A549 (cell line): ENCODE measurements at regions of chr9 and their contacts with region 1.

Region 1: GRCh38 chr9:131046581-131047202 is 37.7 kb downstream of the LAMC3 start:
- DNase-seq: peak; percentile 65 to 69
- ATAC-seq: peak; percentile 83 to 96
- H3K4me3 ChIP-seq: no peak overlapping the region
- H3K27ac ChIP-seq: no peak overlapping the region
- H3K4me1 ChIP-seq: no peaks in the 10 kb centered on the region
- CTCF ChIP-seq: peak; percentile 95
- EP300 ChIP-seq: no peak
- POLR2A ChIP-seq: no peak
- RAD21 ChIP-seq: peak; percentile 89 to 94

Region 2: GRCh38 chr9:130701056-130702022 is 345.4 kb before region 1 on chr9:
- CTCF ChIA-PET with region 1: interaction called, 21 read pairs
- POLR2A ChIA-PET with region 1: interaction called, 4 read pairs
- DNase-seq: peak; percentile 71 to 74
- ATAC-seq: peak; percentile 94 to 98
- H3K4me3 ChIP-seq: no peak overlapping the region
- H3K27ac ChIP-seq: no peak overlapping the region
- H3K4me1 ChIP-seq: no peaks in the 10 kb centered on the region
- CTCF ChIP-seq: peak; percentile 87
- EP300 ChIP-seq: no peak
- POLR2A ChIP-seq: no peak
- RAD21 ChIP-seq: peak; percentile 50 to 57; a peak in 4 of 5 replicates

Region 3: DNA sequence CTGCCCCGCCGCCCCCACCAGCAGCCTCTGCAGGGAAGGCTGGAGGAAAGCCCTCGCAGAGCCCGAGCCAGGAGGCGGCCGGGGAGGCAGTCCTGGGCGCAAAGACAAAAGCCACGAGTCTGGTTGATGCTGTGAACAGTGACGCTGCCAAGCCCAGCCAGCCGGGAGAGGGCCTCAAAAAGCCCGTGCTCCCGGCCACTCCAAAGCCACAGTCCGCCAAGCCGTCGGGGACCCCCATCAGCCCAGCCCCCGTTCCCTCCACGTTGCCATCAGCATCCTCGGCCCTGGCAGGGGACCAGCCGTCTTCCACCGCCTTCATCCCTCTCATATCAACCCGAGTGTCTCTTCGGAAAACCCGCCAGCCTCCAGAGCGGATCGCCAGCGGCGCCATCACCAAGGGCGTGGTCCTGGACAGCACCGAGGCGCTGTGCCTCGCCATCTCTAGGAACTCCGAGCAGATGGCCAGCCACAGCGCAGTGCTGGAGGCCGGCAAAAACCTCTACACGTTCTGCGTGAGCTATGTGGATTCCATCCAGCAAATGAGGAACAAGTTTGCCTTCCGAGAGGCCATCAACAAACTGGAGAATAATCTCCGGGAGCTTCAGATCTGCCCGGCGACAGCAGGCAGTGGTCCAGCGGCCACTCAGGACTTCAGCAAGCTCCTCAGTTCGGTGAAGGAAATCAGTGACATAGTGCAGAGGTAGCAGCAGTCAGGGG is 161.6 kb before region 1 on chr9:
- CTCF ChIA-PET with region 1: interaction called, 15 read pairs
- POLR2A ChIA-PET with region 1: no interaction called
- DNase-seq: no peak
- ATAC-seq: no peak
- H3K4me3 ChIP-seq: no peak overlapping the region
- H3K27ac ChIP-seq: peak overlapping the region in 1 of 2 experiments; percentile 75; a peak in 3 of 6 replicates
- H3K4me1 ChIP-seq: no peaks in the 10 kb centered on the region
- CTCF ChIP-seq: no peak
- EP300 ChIP-seq: no peak
- POLR2A ChIP-seq: no peak
- RAD21 ChIP-seq: no peak

Region 4: GRCh38 chr9:130927995-130928900 is 118.4 kb before region 1 on chr9:
- CTCF ChIA-PET with region 1: interaction called, 22 read pairs
- POLR2A ChIA-PET with region 1: no interaction called
- DNase-seq: peak; percentile 81 to 83
- ATAC-seq: peak; percentile 60 to 72
- H3K4me3 ChIP-seq: peak overlapping the region; percentile 18; the same call in 2 of the 3 replicates
- H3K27ac ChIP-seq: peak overlapping the region; percentile 82 to 93
- H3K4me1 ChIP-seq: peaks cover 38% of the 10 kb centered on the region
- CTCF ChIP-seq: no peak
- EP300 ChIP-seq: no peak
- POLR2A ChIP-seq: no peak
- RAD21 ChIP-seq: no peak

Region 5: DNA sequence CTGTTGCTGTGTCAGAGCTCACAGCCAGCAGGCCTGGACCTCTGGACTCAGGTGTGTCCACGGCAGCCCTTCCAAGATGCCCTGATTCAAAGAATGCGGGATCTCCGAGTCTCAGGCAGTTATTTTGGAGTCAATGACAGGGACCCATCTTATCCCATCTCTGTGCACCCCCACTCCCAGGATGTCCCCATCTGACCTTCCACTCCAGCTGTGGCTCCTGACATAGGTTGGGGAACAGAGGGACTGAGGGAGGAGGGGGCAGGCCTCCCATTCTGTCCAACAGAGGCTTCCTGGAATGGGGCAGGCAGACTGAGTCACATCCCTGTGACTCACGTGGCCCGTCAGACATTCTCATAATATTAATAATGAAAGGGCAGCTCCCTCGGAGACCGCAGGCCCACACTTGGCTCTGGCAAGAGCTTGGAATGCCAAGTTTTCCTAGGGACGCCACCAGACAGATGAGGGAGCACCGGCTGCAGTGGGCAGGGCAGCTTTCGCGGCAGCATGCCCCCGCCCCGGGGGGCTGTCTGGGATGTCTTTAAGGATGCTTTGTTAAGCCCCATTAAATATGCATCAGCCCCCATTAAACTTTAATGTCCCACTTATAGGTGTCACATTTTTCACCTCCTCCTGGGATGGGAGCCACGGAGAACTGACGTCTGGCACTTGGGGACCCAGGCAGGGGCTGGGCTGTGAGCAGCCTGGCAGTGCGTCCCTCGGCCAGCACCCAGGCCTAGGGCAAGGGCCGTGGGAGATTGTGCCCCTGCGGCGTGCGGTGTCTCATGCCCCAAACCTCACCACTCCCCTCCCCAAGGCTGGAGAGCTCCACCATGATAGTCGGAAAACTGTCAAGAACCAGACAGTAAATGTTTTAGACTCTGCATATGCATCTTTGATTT is 84.0 kb before region 1 on chr9:
- CTCF ChIA-PET with region 1: interaction called, 12 read pairs
- POLR2A ChIA-PET with region 1: no interaction called
- DNase-seq: peak; percentile 82 to 95
- ATAC-seq: peak; percentile 98
- H3K4me3 ChIP-seq: no peak overlapping the region
- H3K27ac ChIP-seq: peak overlapping the region; percentile 83 to 90
- H3K4me1 ChIP-seq: peaks cover 16% of the 10 kb centered on the region
- CTCF ChIP-seq: no peak
- EP300 ChIP-seq: no peak
- POLR2A ChIP-seq: no peak
- RAD21 ChIP-seq: no peak; a peak in 1 of 5 replicates

Region 6: DNA sequence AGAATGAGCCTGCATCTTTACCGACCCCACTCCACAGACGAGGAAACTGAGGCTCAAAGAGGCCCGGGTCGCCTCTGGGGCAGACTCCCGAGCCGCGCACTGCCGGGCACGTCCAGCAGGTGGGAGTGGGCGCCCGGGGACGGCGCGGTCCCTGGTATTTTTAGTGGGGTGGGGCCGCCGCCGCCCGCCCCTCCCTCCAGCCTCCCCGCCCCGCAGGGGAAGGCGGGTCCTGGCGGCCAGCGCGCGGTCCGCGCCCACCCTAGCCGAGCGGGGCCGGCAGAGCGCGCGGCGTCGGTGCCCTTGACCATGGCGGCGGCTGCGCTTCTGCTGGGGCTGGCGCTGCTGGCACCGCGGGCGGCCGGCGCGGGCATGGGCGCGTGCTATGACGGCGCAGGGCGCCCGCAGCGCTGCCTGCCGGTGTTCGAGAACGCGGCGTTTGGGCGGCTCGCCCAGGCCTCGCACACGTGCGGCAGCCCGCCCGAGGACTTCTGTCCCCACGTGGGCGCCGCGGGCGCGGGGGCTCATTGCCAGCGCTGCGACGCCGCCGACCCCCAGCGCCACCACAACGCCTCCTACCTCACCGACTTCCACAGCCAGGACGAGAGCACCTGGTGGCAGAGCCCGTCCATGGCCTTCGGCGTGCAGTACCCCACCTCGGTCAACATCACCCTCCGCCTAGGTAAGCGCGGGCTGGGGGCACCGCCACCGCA is 37.6 kb before region 1 on chr9 and contains the start of gene LAMC3:
- CTCF ChIA-PET with region 1: interaction called, 39 read pairs
- POLR2A ChIA-PET with region 1: no interaction called
- DNase-seq: peak; percentile 52 to 65
- ATAC-seq: peak; percentile 82 to 87
- H3K4me3 ChIP-seq: peak within 1 kb of the TSS; percentile 54
- H3K27ac ChIP-seq: peak within 1 kb of the TSS; percentile 56 to 82; a peak in 5 of 6 replicates
- H3K4me1 ChIP-seq: peaks cover 4% of the 10 kb centered on the region; the same call in 1 of the 3 replicates
- CTCF ChIP-seq: peak; percentile 50
- EP300 ChIP-seq: no peak
- POLR2A ChIP-seq: no peak
- RAD21 ChIP-seq: peak; percentile 44 to 69; a peak in 4 of 5 replicates
- polyA plus RNA-seq, gene LAMC3: 1.0 TPM in 2 replicates

Region 7: DNA sequence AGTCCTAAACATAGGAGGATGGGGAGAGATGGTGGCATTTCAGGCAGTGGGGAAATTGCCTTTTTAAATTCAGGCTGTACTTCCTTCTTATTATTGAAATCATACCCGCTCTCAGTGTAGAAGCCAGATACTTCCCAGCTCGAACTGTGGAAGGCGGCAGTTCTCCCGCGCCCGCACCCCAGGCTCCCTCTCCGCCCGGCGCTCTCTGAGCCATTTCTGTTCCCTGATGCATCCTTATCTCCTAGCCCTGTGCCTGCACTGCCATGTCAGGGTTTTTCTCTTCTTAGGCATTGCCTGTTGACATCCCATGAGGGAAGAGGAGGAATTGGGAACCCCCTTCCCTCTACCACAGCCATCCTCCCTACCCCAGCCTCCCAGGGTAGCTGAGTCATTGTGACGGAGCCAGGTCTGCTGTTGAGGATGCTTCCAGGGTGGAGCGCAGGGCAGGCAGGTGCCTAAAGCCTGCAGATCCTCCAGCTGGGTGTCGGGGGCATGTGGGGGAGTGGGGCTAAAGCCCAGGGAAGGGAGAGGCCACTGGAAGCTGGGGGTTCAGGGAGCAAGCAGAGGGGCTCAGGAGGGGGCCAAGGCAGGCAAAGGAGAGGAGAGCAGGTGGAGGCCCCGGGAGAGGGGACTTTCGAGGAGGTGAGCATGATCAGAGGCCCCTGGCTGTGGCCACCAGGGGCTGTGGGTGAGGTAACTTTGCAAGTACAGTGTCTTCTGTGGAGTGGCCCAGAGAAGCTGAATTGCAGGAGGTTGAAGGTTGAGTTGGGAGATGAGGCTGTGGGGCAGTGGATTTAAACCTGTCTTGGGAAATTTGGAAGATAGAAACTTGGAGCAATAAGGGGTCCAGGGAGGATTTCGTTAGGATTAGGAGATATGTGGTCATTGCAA is 21.5 kb before region 1 on chr9:
- CTCF ChIA-PET with region 1: interaction called, 33 read pairs
- POLR2A ChIA-PET with region 1: no interaction called
- DNase-seq: peak in 1 of 2 experiments; percentile 26
- ATAC-seq: peak in 1 of 2 experiments; percentile 57; a peak in 3 of 6 replicates
- H3K4me3 ChIP-seq: no peak overlapping the region
- H3K27ac ChIP-seq: peak overlapping the region; percentile 36 to 73; a peak in 4 of 6 replicates
- H3K4me1 ChIP-seq: peaks cover 11% of the 10 kb centered on the region
- CTCF ChIP-seq: no peak
- EP300 ChIP-seq: no peak
- POLR2A ChIP-seq: no peak
- RAD21 ChIP-seq: no peak

Region 8: DNA sequence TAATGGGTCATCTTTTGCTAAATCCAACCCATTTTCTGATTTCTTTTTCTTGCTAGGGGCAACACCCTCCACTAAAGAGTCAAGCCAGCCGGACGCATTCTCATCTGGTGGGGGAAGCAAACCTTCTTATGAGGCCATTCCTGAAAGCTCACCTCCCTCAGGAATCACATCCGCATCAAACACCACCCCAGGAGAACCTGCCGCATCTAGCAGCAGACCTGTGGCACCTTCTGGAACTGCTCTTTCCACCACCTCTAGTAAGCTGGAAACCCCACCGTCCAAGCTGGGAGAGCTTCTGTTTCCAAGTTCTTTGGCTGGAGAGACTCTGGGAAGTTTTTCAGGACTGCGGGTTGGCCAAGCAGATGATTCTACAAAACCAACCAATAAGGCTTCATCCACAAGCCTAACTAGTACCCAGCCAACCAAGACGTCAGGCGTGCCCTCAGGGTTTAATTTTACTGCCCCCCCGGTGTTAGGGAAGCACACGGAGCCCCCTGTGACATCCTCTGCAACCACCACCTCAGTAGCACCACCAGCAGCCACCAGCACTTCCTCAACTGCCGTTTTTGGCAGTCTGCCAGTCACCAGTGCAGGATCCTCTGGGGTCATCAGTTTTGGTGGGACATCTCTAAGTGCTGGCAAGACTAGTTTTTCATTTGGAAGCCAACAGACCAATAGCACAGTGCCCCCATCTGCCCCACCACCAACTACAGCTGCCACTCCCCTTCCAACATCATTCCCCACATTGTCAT is 150.6 kb after region 1 on chr9:
- CTCF ChIA-PET with region 1: no interaction called
- POLR2A ChIA-PET with region 1: no interaction called
- DNase-seq: no peak
- ATAC-seq: no peak; a peak in 1 of 6 replicates
- H3K4me3 ChIP-seq: no peak overlapping the region
- H3K27ac ChIP-seq: no peak overlapping the region
- H3K4me1 ChIP-seq: no peaks in the 10 kb centered on the region
- CTCF ChIP-seq: no peak
- EP300 ChIP-seq: no peak
- POLR2A ChIP-seq: no peak
- RAD21 ChIP-seq: no peak

Region 9: DNA sequence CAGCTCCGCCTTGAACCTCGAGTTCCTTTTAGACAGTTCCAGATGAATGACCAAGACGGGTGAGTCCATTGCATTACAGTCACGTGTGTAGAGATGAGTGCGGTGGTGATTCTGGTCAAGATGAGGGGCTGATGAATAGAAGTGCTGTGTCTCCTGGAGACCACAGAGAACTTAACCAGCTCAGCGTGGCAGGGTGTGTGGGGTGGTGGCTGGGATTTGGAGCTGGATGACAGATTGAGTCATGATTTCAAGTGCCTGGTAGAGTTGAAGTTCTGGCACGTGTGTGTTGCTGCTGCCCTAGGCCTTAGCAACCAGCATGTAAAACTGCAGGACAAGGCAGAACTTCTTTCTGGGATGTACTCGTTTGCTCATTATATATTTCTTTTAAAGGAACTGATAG is 400.5 kb after region 1 on chr9:
- CTCF ChIA-PET with region 1: no interaction called
- POLR2A ChIA-PET with region 1: no interaction called
- DNase-seq: no peak
- ATAC-seq: no peak; a peak in 1 of 6 replicates
- H3K4me3 ChIP-seq: no peak overlapping the region
- H3K27ac ChIP-seq: no peak overlapping the region
- H3K4me1 ChIP-seq: no peaks in the 10 kb centered on the region
- CTCF ChIP-seq: no peak
- EP300 ChIP-seq: no peak
- POLR2A ChIP-seq: no peak
- RAD21 ChIP-seq: no peak